ENCODE measurements at regions of chr1 and their contacts with region 1.

Region 1: GRCh38 chr1:161766102-161766981 is at the start of gene ATF6:
- DNase-seq: peak; percentile 81
- CTCF ChIP-seq: no peak

Region 2: DNA sequence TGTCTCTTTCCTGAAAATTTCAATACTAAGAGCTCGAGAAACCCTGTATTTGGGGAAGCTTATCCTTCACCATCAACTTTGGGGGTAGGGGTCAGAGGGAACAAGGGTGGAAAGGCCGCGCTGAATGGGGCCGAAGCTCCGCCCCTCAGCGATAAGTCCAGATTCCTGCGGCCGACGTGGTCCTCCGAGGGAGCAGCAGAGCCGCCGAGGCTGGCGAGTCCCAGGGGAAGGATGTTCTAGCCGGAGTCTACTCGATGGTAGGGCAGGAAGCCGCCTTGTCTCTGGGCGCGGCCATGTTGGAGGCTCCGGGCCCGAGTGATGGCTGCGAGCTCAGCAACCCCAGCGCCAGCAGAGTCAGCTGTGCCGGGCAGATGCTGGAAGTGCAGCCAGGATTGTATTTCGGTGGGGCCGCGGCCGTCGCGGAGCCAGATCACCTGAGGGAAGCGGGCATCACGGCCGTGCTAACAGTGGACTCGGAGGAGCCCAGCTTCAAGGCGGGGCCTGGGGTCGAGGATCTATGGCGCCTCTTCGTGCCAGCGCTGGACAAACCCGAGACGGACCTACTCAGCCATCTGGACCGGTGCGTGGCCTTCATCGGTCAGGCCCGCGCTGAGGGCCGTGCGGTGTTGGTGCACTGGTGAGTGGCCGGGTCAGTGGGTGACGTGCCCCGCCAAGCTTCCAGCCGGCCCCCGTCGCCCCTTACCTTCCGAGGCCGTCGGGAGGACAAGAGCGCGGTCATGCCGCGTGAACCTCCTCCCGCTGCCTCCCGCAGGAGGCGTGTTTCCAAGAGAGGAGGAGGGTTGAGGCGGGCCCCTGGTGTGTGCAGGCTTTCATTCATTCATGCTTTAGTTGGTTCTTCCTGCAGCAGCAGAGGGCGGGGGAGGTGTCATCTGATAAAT is 16.6 kb before region 1 on chr1 and contains the start of gene DUSP12:
- CTCF ChIA-PET with region 1: interaction called, 16 read pairs
- POLR2A ChIA-PET with region 1: interaction called, 5 read pairs
- DNase-seq: peak; percentile 90
- CTCF ChIP-seq: peak; percentile 49

Region 3: GRCh38 chr1:161899091-161899490 is 132.7 kb after region 1 on chr1:
- CTCF ChIA-PET with region 1: no interaction called
- POLR2A ChIA-PET with region 1: no interaction called
- DNase-seq: no peak
- CTCF ChIP-seq: no peak